Vagina (tissue), 2 donors: ENCODE measurements at regions of chr20 and their contacts with region 1.

Region 1: DNA sequence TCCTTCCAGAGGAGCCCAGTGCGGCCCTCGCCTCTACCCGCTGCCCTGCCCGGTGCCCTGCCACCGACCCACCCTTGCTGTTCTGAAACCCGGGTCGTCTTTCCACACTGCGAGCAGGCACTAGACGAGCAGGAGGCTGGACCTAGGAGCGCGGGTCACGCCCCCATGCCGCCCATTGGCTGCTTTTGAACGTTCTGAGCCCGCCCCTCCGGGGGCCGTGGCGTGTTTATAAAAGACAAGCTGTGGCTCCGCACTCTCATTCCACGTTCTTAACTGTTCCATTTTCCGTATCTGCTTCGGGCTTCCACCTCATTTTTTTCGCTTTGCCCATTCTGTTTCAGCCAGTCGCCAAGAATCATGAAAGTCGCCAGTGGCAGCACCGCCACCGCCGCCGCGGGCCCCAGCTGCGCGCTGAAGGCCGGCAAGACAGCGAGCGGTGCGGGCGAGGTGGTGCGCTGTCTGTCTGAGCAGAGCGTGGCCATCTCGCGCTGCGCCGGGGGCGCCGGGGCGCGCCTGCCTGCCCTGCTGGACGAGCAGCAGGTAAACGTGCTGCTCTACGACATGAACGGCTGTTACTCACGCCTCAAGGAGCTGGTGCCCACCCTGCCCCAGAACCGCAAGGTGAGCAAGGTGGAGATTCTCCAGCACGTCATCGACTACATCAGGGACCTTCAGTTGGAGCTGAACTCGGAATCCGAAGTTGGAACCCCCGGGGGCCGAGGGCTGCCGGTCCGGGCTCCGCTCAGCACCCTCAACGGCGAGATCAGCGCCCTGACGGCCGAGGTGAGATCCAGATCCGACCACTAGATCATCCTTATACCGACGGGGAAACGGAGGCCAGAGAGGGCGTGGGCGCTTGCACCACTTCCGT is at the start of gene ID1:
- DNase-seq: peak in 1 of 2 donors; percentile 98
- H3K4me3 ChIP-seq: peak within 1 kb of the TSS; percentile 71 to 96
- H3K27ac ChIP-seq: peak within 1 kb of the TSS; percentile 77
- H3K4me1 ChIP-seq: peaks cover 60% of the 10 kb centered on the region
- H3K27me3 ChIP-seq: no peaks in the 10 kb centered on the region
- CTCF ChIP-seq: no peak
- POLR2A ChIP-seq: peak in 1 of 2 donors; percentile 92
- total RNA-seq, gene ID1: 1,190 TPM

Region 2: GRCh38 chr20:31547017-31547675 is 58.1 kb before region 1 on chr20:
- intact Hi-C with region 1: no loop called
- DNase-seq: no peak
- H3K4me3 ChIP-seq: peak overlapping the region; percentile 43
- H3K27ac ChIP-seq: peak overlapping the region; percentile 63
- H3K4me1 ChIP-seq: peaks cover 50% of the 10 kb centered on the region
- H3K27me3 ChIP-seq: no peaks in the 10 kb centered on the region
- CTCF ChIP-seq: peak in 1 of 3 experiments; percentile 5
- POLR2A ChIP-seq: no peak

Region 3: GRCh38 chr20:31572701-31573554 is 32.3 kb before region 1 on chr20:
- intact Hi-C with region 1: loop called (anchors 2 kb)
- DNase-seq: peak in 1 of 2 donors; percentile 99
- H3K4me3 ChIP-seq: peak overlapping the region; percentile 42 to 54
- H3K27ac ChIP-seq: peak overlapping the region; percentile 94
- H3K4me1 ChIP-seq: peaks cover 40% of the 10 kb centered on the region
- H3K27me3 ChIP-seq: no peaks in the 10 kb centered on the region
- CTCF ChIP-seq: no peak
- POLR2A ChIP-seq: peak in 1 of 2 donors; percentile 40

Region 4: GRCh38 chr20:31661625-31662371 is 56.5 kb after region 1 on chr20:
- intact Hi-C with region 1: no loop called
- DNase-seq: peak in 1 of 2 donors; percentile 92
- H3K4me3 ChIP-seq: peak overlapping the region; percentile 39 to 41
- H3K27ac ChIP-seq: peak overlapping the region; percentile 92
- H3K4me1 ChIP-seq: peaks cover 50% of the 10 kb centered on the region
- H3K27me3 ChIP-seq: no peaks in the 10 kb centered on the region
- CTCF ChIP-seq: peak; percentile 60 to 96 (median 64)
- POLR2A ChIP-seq: no peak

Region 5: GRCh38 chr20:31674895-31675827 is 69.9 kb after region 1 on chr20:
- intact Hi-C with region 1: no loop called
- DNase-seq: no peak
- H3K4me3 ChIP-seq: peak overlapping the region; percentile 9 to 17
- H3K27ac ChIP-seq: peak overlapping the region; percentile 83
- H3K4me1 ChIP-seq: peaks cover 95% of the 10 kb centered on the region
- H3K27me3 ChIP-seq: no peaks in the 10 kb centered on the region
- CTCF ChIP-seq: no peak
- POLR2A ChIP-seq: no peak

Region 6: DNA sequence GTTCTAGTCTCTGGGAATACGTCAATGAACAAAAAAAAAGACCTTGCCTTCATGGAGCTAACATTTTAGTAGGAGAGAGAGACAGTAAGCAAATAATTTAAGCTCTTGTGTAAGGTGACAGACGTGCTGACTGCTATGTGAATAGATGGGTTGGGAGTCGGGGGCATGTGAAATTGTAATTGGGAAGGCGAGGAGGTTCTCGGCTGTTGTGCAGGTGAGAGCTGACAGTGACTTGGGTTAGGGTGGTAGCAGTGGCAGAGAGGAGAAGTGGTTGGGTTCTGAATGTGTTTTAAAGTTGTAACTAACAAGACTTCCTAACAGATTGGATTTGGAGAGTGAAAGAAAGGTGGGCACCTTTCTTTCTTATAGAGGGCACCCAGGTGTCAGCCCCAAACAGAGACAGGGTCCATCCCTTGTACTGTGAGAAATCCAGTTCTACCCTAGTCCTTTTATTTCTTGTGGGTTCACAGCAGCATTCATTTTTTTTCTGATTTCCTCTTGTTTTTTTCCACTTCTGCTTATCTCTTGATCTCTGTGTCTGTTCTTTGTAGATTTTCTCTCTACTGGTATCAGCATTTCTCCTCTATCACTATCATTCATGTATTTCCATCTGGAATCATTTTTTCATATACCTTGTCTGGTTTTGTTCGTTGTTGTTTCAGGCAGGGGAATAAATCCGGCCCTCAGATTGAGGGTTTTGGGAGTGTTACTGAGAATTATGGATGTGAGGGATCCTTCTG is 198.5 kb after region 1 on chr20:
- intact Hi-C with region 1: no loop called
- DNase-seq: no peak
- H3K4me3 ChIP-seq: no peak overlapping the region
- H3K27ac ChIP-seq: no peak overlapping the region
- H3K4me1 ChIP-seq: no peaks in the 10 kb centered on the region
- H3K27me3 ChIP-seq: no peaks in the 10 kb centered on the region
- CTCF ChIP-seq: no peak
- POLR2A ChIP-seq: no peak